Posterior cingulate gyrus (tissue), 11 donors: ENCODE measurements at regions of chr10 and their contacts with region 1.

Region 1: DNA sequence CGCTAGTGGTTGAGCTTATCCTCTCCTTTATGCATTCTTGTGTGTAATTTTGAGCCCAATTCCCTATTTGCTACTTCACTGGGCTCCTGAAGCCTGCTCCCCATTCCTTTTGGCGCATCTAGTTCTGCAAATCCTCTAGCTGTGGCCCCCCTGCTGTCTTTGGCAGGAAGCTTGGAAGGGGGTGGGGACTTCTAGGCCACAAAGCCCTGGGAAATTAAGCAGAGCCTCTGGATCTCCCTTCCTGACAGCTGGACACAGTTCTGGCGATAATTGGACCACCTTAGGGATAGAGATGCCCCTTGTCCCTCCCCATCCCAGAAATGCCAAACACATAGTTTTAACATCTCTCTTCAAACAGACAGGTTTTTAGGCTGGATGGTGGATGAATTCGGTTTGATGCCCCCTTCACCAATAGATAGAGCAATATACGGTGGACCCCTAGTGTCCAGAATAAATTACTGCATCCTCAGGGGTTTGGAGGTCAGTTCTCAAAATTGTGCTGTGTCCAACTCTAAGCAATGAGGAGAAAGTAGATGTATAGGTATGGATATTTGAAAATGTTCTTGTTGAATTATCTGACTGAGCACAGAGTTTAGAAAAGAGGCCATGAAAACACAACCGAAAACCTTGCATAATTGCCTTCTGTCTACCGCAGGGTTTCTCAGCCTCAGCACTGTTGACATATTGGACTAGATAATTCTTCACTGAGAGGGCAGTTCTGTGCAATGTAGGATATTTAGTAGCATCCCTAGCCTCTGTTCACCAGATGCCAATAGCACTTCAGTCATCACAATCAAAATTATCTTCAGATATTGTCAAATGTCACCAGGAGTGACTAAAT is 75.5 kb downstream of the PAPSS2 start:
- DNase-seq: no peak

Region 2: GRCh38 chr10:87547734-87548311 is 187.4 kb before region 1 on chr10:
- intact Hi-C with region 1: loop called (anchors 10 kb)
- DNase-seq: no peak